A549 (cell line): ENCODE measurements at regions of chr6 and their contacts with region 1.

Region 1: GRCh38 chr6:116268589-116269293 is 11.0 kb downstream of the TSPYL1 start:
- DNase-seq: peak; percentile 44 to 73
- ATAC-seq: peak; percentile 85 to 95
- H3K4me3 ChIP-seq: no peak overlapping the region
- H3K27ac ChIP-seq: no peak overlapping the region
- H3K4me1 ChIP-seq: peaks cover 8% of the 10 kb centered on the region; the same call in 1 of the 3 replicates
- CTCF ChIP-seq: peak; percentile 86
- EP300 ChIP-seq: no peak
- POLR2A ChIP-seq: no peak
- RAD21 ChIP-seq: peak; percentile 68 to 71

Region 2: GRCh38 chr6:116234689-116235088 is 34.1 kb before region 1 on chr6:
- CTCF ChIA-PET with region 1: no interaction called
- POLR2A ChIA-PET with region 1: no interaction called
- DNase-seq: no peak
- ATAC-seq: no peak
- H3K4me3 ChIP-seq: no peak overlapping the region
- H3K27ac ChIP-seq: no peak overlapping the region
- H3K4me1 ChIP-seq: no peaks in the 10 kb centered on the region
- CTCF ChIP-seq: no peak
- EP300 ChIP-seq: no peak
- POLR2A ChIP-seq: no peak
- RAD21 ChIP-seq: no peak

Region 3: DNA sequence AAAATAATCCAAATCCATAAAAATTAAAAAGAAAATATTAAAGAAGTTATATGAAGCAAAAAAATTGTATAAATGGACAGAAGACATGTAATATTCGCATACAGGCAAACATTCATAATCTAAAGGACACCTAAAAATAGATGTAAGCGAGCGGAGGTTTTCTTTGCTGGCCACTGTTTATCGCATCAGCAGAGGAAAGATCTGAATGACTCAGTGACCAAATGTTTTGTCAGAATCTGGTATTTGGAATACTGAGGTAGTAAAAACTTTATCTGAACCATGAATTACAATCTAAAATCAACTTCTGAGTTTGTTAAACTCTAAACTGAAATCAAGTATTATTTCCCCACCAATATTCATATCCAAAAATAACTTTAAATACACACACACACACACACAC is 22.7 kb before region 1 on chr6:
- CTCF ChIA-PET with region 1: no interaction called
- POLR2A ChIA-PET with region 1: no interaction called
- DNase-seq: no peak
- ATAC-seq: no peak
- H3K4me3 ChIP-seq: no peak overlapping the region
- H3K27ac ChIP-seq: no peak overlapping the region
- H3K4me1 ChIP-seq: no peaks in the 10 kb centered on the region; the same call in 2 of the 3 replicates
- CTCF ChIP-seq: no peak
- EP300 ChIP-seq: no peak
- POLR2A ChIP-seq: no peak
- RAD21 ChIP-seq: no peak

Region 4: DNA sequence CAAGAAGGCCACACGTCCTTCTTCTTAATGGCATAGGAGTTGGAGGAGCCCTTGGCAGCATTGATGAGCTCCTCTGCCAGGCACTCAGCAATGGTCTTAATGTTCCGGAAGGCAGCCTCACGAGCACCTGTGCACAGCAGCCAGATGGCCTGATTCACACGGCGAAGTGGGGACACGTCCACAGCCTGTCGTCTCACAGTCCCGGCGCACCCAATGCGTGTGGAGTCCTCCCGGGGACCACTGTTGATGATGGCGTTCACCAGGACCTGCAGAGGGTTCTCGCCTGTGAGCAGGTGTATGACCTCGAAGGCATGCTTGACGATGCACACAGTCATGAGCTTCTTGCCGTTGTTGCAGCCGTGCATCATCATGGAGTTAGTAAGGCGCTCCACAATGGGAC is 10.2 kb before region 1 on chr6:
- CTCF ChIA-PET with region 1: interaction called, 12 read pairs
- POLR2A ChIA-PET with region 1: interaction called, 5 read pairs
- DNase-seq: no peak
- ATAC-seq: no peak
- H3K4me3 ChIP-seq: no peak overlapping the region
- H3K27ac ChIP-seq: no peak overlapping the region
- H3K4me1 ChIP-seq: peaks cover 8% of the 10 kb centered on the region; the same call in 1 of the 3 replicates
- CTCF ChIP-seq: no peak
- EP300 ChIP-seq: no peak
- POLR2A ChIP-seq: no peak
- RAD21 ChIP-seq: no peak

Region 5: DNA sequence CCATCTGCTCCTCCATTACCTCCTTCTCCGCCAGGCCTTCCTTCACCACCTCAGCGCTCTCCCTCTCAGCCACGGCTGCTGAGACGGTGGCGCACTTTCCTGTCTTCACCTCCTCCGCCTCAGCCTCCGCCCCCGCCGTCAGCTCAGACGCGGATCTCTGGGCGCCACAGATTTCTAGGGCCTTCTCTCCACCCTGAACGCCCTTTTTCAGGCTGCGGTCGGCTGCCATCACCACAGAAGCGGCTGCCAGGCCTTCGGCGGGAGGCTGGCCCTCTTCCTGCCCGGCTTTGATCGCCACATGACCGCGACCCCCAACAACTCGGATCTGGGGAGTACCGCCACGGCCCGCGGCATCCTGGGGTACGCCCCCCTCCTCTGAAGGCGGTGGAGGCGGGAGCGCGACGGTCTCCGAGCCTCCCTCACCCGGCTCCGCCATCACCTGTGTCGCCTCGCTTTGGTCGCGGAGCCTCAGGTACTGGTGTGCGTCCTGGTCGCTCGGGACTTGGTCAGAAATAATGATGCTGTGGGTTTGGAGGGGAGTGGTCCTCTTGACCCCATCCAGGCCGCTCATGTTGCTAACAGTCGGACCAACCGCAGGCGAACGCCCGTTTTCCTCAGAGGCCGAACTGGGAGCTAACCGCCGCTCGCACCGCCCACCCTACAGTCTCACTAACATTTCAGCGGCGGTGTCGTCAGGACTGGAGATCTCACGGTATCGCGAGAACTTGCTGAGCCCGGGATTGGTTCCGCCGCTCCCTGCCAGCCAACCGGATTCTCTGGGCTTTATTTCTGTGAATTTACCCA is 10.7 kb after region 1 on chr6 and contains the start of gene TSPYL1:
- CTCF ChIA-PET with region 1: interaction called, 17 read pairs
- POLR2A ChIA-PET with region 1: interaction called, 6 read pairs
- DNase-seq: peak; percentile 79 to 94
- ATAC-seq: peak; percentile 98
- H3K4me3 ChIP-seq: peak within 1 kb of the TSS; percentile 100
- H3K27ac ChIP-seq: peak within 1 kb of the TSS; percentile 94 to 97
- H3K4me1 ChIP-seq: peaks cover 36% of the 10 kb centered on the region
- CTCF ChIP-seq: no peak
- EP300 ChIP-seq: no peak
- POLR2A ChIP-seq: peak; percentile 71
- RAD21 ChIP-seq: no peak
- polyA plus RNA-seq, gene TSPYL1: 31.6 and 32.5 TPM in 2 replicates

Region 6: GRCh38 chr6:116450769-116451740 is 182.3 kb after region 1 on chr6:
- CTCF ChIA-PET with region 1: no interaction called
- POLR2A ChIA-PET with region 1: no interaction called
- DNase-seq: no peak
- ATAC-seq: no peak
- H3K4me3 ChIP-seq: no peak overlapping the region
- H3K27ac ChIP-seq: no peak overlapping the region
- H3K4me1 ChIP-seq: peaks cover 20% of the 10 kb centered on the region
- CTCF ChIP-seq: no peak
- EP300 ChIP-seq: no peak
- POLR2A ChIP-seq: no peak
- RAD21 ChIP-seq: no peak

Region 7: GRCh38 chr6:116485559-116486184 is 216.9 kb after region 1 on chr6:
- CTCF ChIA-PET with region 1: no interaction called
- POLR2A ChIA-PET with region 1: no interaction called
- DNase-seq: no peak
- ATAC-seq: no peak
- H3K4me3 ChIP-seq: no peak overlapping the region
- H3K27ac ChIP-seq: no peak overlapping the region
- H3K4me1 ChIP-seq: no peaks in the 10 kb centered on the region
- CTCF ChIP-seq: no peak
- EP300 ChIP-seq: no peak
- POLR2A ChIP-seq: no peak
- RAD21 ChIP-seq: no peak

Region 8: DNA sequence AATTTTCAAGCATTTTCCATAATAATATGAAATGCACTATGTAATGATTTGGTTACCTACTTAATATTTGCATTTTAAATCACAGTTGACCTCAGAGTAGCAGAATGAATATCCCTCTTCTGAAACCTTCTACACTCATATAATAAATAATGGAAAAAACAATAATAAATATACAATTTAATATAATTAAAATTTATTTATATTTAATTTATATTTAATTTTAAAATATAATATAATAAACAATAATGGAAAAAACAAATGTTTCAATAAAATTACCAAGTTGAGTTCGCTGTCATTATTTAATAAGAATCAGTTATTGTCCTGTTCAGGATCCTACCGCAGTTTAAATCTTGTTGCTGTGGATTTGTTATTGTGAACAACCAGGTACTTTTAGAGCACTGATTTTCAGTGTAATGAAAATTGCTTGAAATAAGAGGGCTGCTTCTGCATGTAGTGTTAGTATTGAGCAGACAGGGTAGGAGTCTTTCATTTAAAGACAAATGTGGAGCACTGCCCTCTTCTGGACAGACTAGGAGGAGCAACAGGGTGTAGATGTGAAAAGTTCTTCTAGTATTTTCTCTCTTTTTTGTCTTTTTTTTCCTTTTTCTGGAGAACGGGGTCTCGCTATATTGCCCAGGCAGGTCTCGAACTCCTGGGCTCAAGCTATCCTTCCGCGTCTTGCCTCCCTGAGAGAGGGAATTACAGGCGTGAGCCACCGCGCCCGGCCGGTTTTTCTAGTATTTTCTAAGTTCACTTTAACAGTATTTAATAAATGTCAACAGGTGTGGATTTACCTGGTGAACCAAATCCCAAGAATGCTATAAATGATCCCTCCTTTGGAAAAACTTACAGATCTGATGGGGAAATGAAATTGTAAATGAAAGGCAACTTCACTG is 263.2 kb after region 1 on chr6:
- CTCF ChIA-PET with region 1: interaction called, 12 read pairs
- POLR2A ChIA-PET with region 1: no interaction called
- DNase-seq: peak; percentile 28 to 65
- ATAC-seq: peak; percentile 76 to 89; a peak in 4 of 6 replicates
- H3K4me3 ChIP-seq: no peak overlapping the region
- H3K27ac ChIP-seq: no peak overlapping the region
- H3K4me1 ChIP-seq: peaks cover 12% of the 10 kb centered on the region
- CTCF ChIP-seq: peak; percentile 67
- EP300 ChIP-seq: no peak
- POLR2A ChIP-seq: no peak
- RAD21 ChIP-seq: peak; percentile 57 to 58

Region 9: GRCh38 chr6:116561377-116562018 is 292.8 kb after region 1 on chr6:
- CTCF ChIA-PET with region 1: interaction called, 80 read pairs
- POLR2A ChIA-PET with region 1: no interaction called
- DNase-seq: peak; percentile 9 to 55
- ATAC-seq: peak; percentile 55 to 76; a peak in 4 of 6 replicates
- H3K4me3 ChIP-seq: no peak overlapping the region
- H3K27ac ChIP-seq: no peak overlapping the region
- H3K4me1 ChIP-seq: peaks cover 26% of the 10 kb centered on the region
- CTCF ChIP-seq: peak; percentile 84
- EP300 ChIP-seq: no peak
- POLR2A ChIP-seq: no peak
- RAD21 ChIP-seq: peak; percentile 81